H1 (cell line): ENCODE measurements at regions of chr1 and their contacts with region 1.

Region 1: GRCh38 chr1:67561704-67562113 is 123.3 kb upstream of the GADD45A start:
- DNase-seq: peak; percentile 54 to 98
- H3K4me3 ChIP-seq: no peak overlapping the region
- H3K27ac ChIP-seq: no peak overlapping the region
- H3K4me1 ChIP-seq: no peaks in the 10 kb centered on the region
- H3K27me3 ChIP-seq: no peaks in the 10 kb centered on the region
- CTCF ChIP-seq: peak; percentile 86 to 92 (median 91)
- EP300 ChIP-seq: no peak
- POLR2A ChIP-seq: no peak
- RAD21 ChIP-seq: peak; percentile 94 to 95

Region 2: GRCh38 chr1:66938613-66939012 is 623.1 kb before region 1 on chr1:
- CTCF ChIA-PET with region 1: no interaction called
- POLR2A ChIA-PET with region 1: no interaction called
- DNase-seq: no peak
- H3K4me3 ChIP-seq: no peak overlapping the region
- H3K27ac ChIP-seq: no peak overlapping the region
- H3K4me1 ChIP-seq: peaks cover 0 to 2% (median 0%) of the 10 kb centered on the region in 4 experiments; a peak in 1 of 7 replicates
- H3K27me3 ChIP-seq: no peaks in the 10 kb centered on the region
- CTCF ChIP-seq: no peak
- EP300 ChIP-seq: no peak
- POLR2A ChIP-seq: no peak
- RAD21 ChIP-seq: no peak

Region 3: GRCh38 chr1:67460676-67461500 is 100.8 kb before region 1 on chr1:
- CTCF ChIA-PET with region 1: no interaction called
- POLR2A ChIA-PET with region 1: no interaction called
- DNase-seq: no peak
- H3K4me3 ChIP-seq: no peak overlapping the region
- H3K27ac ChIP-seq: no peak overlapping the region
- H3K4me1 ChIP-seq: peaks cover 4 to 30% (median 27%) of the 10 kb centered on the region in 4 experiments; a peak in 6 of 7 replicates
- H3K27me3 ChIP-seq: no peaks in the 10 kb centered on the region
- CTCF ChIP-seq: no peak
- EP300 ChIP-seq: no peak
- POLR2A ChIP-seq: no peak
- RAD21 ChIP-seq: no peak

Region 4: GRCh38 chr1:67535474-67535873 is 26.2 kb before region 1 on chr1:
- CTCF ChIA-PET with region 1: interaction called, 214 read pairs
- POLR2A ChIA-PET with region 1: no interaction called
- DNase-seq: peak; percentile 41 to 86
- H3K4me3 ChIP-seq: no peak overlapping the region
- H3K27ac ChIP-seq: no peak overlapping the region
- H3K4me1 ChIP-seq: no peaks in the 10 kb centered on the region
- H3K27me3 ChIP-seq: no peaks in the 10 kb centered on the region
- CTCF ChIP-seq: peak; percentile 90 to 98 (median 97)
- EP300 ChIP-seq: no peak
- POLR2A ChIP-seq: no peak
- RAD21 ChIP-seq: peak; percentile 90 to 94

Region 5: DNA sequence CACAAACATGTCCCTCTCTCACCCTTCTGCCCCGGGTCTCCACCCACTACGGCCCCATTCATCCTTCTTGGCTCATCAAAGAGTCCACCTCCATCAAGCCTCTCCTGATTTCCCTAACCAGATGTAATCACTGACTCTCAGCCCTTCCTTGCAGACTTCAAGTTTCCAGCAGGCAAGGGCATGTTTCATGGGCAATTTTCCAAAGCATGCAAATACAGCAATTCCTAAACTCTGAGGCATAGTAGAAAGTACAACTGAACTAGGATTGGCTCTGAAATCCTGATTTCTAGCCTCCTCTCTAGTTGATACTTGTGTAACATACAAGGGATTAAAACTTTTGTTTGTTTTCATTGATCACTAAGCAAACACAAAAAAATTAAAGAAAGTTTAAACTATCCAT is 14.2 kb after region 1 on chr1:
- CTCF ChIA-PET with region 1: interaction called, 107 read pairs
- POLR2A ChIA-PET with region 1: no interaction called
- DNase-seq: no peak
- H3K4me3 ChIP-seq: no peak overlapping the region
- H3K27ac ChIP-seq: no peak overlapping the region
- H3K4me1 ChIP-seq: 0 out of 7 replicates have a peak, but pooled peaks cover 0 to 2% (median 0%) of the 10 kb centered on the region in 4 experiments
- H3K27me3 ChIP-seq: no peaks in the 10 kb centered on the region
- CTCF ChIP-seq: no peak
- EP300 ChIP-seq: no peak
- POLR2A ChIP-seq: no peak
- RAD21 ChIP-seq: no peak

Region 6: DNA sequence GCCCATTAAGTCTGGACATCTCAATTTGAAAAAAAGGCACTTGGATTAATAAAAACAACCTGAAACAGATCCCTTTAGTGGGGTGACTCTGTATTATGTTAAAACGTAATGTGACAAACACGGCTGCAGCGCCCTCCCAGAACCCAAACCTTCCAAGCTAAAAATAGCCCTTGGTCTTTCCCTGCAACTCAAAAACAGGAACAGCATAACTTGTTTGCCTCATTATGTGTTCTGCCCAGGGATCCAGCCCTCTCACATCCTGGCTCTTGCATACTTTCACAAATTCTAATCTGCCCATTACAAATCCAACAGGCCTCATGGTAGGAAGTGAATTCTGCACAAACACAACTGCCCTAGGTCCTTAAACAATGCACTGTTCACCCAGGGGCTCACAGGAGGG is 28.6 kb after region 1 on chr1:
- CTCF ChIA-PET with region 1: interaction called, 28 read pairs
- POLR2A ChIA-PET with region 1: no interaction called
- DNase-seq: no peak
- H3K4me3 ChIP-seq: no peak overlapping the region
- H3K27ac ChIP-seq: no peak overlapping the region
- H3K4me1 ChIP-seq: peaks cover 0 to 7% (median 2%) of the 10 kb centered on the region in 4 experiments; a peak in 2 of 7 replicates
- H3K27me3 ChIP-seq: no peaks in the 10 kb centered on the region
- CTCF ChIP-seq: no peak
- EP300 ChIP-seq: no peak
- POLR2A ChIP-seq: no peak
- RAD21 ChIP-seq: no peak

Region 7: DNA sequence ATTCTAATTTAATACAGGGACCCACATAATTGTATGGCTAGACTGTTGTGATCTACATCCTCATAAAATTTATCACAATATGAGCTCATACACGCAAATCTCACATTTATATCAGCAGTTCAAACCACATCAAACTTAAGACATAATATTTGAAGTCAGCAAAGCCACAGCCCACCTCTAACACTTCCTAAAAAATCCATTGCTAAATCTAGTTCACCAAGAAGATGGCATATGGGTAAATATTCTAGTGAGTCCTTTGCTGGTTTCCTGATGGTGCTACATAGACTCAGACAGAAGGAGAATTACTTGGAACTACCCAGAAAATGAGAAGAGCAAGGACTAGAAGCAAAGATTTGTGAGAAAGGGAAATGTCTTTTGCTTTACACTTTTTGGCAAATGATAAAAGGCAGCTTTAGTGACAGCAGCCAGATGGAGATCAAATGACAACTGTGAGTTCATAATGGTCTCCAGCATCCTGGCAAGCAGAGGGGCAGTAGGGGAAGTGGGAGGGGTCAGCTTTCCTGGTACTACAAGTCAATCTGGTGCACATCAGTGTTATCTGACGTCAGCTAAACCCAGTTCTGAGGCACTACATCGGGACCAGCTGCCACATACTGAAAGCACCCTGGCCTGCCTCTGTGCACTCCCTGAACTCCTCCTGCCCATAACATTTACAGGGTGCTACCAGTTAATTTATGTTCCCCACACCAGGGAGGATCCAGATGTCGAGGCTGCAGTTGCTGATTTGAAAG is 112.7 kb after region 1 on chr1:
- CTCF ChIA-PET with region 1: interaction called, 17 read pairs
- POLR2A ChIA-PET with region 1: no interaction called
- DNase-seq: no peak
- H3K4me3 ChIP-seq: no peak overlapping the region
- H3K27ac ChIP-seq: no peak overlapping the region
- H3K4me1 ChIP-seq: no peaks in the 10 kb centered on the region
- H3K27me3 ChIP-seq: no peaks in the 10 kb centered on the region
- CTCF ChIP-seq: no peak
- EP300 ChIP-seq: no peak
- POLR2A ChIP-seq: no peak
- RAD21 ChIP-seq: no peak

Region 8: GRCh38 chr1:67753776-67754525 is 192.2 kb after region 1 on chr1:
- CTCF ChIA-PET with region 1: interaction called, 146 read pairs
- POLR2A ChIA-PET with region 1: no interaction called
- DNase-seq: no peak
- H3K4me3 ChIP-seq: no peak overlapping the region
- H3K27ac ChIP-seq: no peak overlapping the region
- H3K4me1 ChIP-seq: peaks cover 8 to 22% (median 21%) of the 10 kb centered on the region in 4 experiments; a peak in 6 of 7 replicates
- H3K27me3 ChIP-seq: no peaks in the 10 kb centered on the region
- CTCF ChIP-seq: no peak
- EP300 ChIP-seq: no peak
- POLR2A ChIP-seq: no peak
- RAD21 ChIP-seq: no peak

Region 9: DNA sequence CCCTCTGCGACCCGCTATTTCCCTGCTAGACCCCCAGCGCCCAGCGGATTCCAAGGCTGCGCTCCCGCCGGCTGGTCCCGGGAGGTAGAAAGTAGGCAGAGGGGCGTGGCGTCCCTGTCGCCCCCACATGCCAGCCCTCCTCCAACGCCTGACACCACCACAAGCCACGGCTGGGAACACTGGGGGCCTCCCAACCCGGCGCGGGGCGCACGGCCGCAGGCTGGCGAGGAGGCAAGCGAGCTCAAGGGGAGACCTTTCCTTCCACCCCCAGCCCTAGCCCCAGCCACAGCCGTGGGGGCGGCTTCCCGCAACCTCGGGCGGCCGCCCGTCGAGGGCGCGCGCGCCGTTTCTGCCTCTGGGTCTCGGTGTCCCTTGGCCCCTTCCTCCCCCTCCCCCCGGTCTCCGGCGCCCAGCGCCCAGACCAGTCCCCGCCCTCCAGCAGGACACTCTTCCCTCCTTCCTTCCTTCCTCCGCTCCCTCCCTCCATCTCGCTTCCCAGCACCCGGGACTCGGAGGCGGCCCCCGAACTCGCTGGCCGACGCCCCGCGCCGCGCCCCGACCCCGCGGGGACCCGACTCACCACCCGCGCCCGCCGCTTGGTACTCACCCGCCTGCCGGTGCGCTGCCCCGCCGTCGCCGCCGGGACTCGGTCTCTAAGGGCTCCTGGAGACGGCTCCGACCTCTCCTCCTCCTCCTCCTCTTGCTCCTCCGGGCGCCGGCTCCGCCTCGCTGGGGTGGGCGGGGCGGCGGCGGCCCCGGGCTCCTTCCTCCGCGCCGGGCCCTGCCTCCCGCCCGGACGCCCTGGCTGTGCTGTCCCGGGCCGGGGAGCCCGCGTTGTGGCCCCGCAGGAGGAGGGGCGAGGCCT is 271.3 kb after region 1 on chr1 and contains the start of gene GNG12:
- CTCF ChIA-PET with region 1: no interaction called
- POLR2A ChIA-PET with region 1: no interaction called
- DNase-seq: peak; percentile 63 to 88
- H3K4me3 ChIP-seq: peak within 1 kb of the TSS; percentile 80 to 94 (median 85)
- H3K27ac ChIP-seq: no peak within 1 kb of the TSS
- H3K4me1 ChIP-seq: peaks cover 0 to 8% (median 2%) of the 10 kb centered on the region in 4 experiments; a peak in 4 of 7 replicates
- H3K27me3 ChIP-seq: peaks cover 3 to 22% (median 17%) of the 10 kb centered on the region in 4 experiments; a peak in 6 of 7 replicates
- CTCF ChIP-seq: no peak
- EP300 ChIP-seq: no peak
- POLR2A ChIP-seq: no peak
- RAD21 ChIP-seq: no peak
- total RNA-seq, gene GNG12: 34.5 and 35.8 TPM in 2 replicates